ENCODE measurements at regions of chr2 and their contacts with region 1.

Region 1: GRCh38 chr2:212974692-212975091 is 176.7 kb downstream of the IKZF2 start:
- DNase-seq: peak; percentile 88
- H3K4me3 ChIP-seq: no peak overlapping the region
- H3K27ac ChIP-seq: peak overlapping the region; percentile 75
- H3K4me1 ChIP-seq: peaks cover 20% of the 10 kb centered on the region
- H3K27me3 ChIP-seq: no peaks in the 10 kb centered on the region
- CTCF ChIP-seq: no peak

Region 2: DNA sequence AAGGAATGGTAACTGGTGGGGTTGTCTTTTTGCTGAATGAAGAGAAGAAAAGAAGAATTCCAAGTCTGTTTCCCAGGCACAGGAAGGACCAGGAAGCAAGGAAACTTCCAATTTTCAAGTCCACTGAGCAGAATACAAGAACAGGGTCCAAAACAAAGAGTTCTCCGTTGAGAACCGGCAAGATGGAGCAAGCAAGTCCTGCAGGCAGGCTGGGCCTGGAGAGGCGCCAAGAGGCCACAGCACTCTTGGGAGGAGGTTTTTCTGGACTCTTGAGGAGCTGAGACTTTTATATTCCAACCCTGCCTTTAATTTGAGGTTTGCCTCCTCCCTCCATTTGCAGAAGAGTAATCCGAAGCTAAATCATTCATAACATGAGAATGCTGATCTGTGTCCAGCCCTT is 47.8 kb before region 1 on chr2:
- CTCF ChIA-PET with region 1: no interaction called
- dilution Hi-C with region 1: no loop called
- in situ Hi-C with region 1: no loop called
- intact Hi-C with region 1: loop called (anchors 5 kb)
- DNase-seq: no peak
- H3K4me3 ChIP-seq: no peak overlapping the region
- H3K27ac ChIP-seq: no peak overlapping the region
- H3K4me1 ChIP-seq: peaks cover 38% of the 10 kb centered on the region
- H3K27me3 ChIP-seq: no peaks in the 10 kb centered on the region
- CTCF ChIP-seq: no peak

Measured in mammary epithelial cell (primary cell).